ENCODE measurements at regions of chr14 and their contacts with region 1.

Region 1: DNA sequence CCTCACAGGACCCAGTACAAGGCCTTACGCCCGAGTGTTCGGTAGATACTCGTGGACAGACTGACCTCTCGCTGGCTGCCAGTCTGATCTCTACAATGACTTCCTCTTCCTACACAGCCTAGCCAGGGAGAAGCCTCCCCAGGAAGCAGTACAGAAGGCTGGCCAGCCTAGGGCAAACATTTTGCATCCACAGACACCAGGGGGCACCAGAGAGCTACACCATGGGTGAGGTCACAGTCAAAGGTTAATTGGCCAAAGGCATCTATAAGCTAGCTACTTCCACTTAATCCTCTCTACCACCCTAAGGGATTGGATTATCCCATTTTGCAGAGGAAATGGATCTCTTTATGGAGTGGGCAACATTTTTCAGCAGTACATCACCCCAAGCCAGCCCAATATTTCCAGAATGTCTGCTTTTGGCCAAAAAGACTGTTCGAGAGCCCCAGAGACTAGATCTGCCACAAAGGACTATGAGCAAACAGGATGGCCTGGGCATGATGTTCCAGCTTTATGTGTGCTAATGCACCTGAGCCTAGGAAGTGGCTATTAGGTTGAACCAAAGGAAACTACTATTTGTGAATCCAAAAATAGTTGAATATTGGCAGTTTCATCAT is 14.6 kb upstream of the PNMA1 start:
- DNase-seq: peak; percentile 78 to 87
- ATAC-seq: peak; percentile 60 to 77; a peak in 5 of 6 replicates
- H3K4me3 ChIP-seq: no peak overlapping the region
- H3K27ac ChIP-seq: peak overlapping the region; percentile 42 to 76; a peak in 5 of 6 replicates
- H3K4me1 ChIP-seq: peaks cover 50% of the 10 kb centered on the region
- CTCF ChIP-seq: peak; percentile 92
- EP300 ChIP-seq: no peak
- POLR2A ChIP-seq: no peak
- RAD21 ChIP-seq: peak; percentile 95 to 97

Region 2: DNA sequence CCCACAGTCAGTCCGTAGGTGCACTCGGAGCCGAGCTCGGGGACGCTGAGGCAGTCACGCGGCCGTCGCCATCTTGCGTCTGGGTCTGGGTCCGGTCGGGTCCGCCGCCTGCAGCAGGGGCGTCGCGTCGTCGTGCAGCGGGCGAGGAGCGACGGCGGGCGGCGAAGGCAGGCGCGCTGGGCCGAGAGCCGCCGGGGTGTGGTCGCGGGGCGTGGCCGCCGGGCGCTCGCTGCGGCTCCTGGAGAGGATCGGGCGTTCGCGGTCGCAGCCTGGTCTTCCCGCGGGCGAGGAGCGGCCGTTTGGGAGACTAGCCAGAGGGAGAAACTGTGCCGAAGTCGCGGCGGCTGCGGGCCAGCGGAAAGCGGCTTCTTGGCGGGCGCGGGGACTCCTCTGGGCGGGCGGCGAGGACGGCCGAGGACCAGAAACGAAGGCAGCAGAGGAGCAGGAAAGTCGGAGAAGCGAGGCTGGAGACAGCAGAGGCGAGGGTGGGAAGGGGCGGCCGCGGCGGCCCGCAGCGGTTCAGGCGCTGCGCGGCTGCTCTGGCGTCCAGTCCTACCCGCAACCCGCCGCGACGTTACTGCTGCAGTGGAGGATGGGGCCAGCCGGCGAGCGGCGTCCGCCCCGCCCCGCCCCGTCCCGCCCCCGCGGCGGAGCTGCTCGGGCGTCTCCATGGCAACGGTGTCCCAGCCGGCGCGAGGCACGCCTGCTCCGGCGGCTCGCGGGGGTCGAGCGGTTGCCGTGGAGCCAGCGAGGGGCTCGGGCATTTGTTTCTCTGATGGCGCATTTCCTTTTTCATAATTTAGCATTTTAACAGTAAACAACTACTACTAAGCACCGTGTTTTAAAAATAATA is 14.8 kb before region 1 on chr14 and contains the start of gene PNMA1:
- CTCF ChIA-PET with region 1: interaction called, 25 read pairs
- POLR2A ChIA-PET with region 1: interaction called, 29 read pairs
- DNase-seq: peak; percentile 82 to 95
- ATAC-seq: peak; percentile 77 to 86
- H3K4me3 ChIP-seq: peak within 1 kb of the TSS; percentile 73
- H3K27ac ChIP-seq: peak within 1 kb of the TSS; percentile 94 to 97
- H3K4me1 ChIP-seq: peaks cover 19% of the 10 kb centered on the region
- CTCF ChIP-seq: no peak
- EP300 ChIP-seq: no peak
- POLR2A ChIP-seq: peak; percentile 94
- RAD21 ChIP-seq: no peak; a peak in 2 of 5 replicates
- polyA plus RNA-seq, gene PNMA1: 20.8 and 21.2 TPM in 2 replicates

Region 3: DNA sequence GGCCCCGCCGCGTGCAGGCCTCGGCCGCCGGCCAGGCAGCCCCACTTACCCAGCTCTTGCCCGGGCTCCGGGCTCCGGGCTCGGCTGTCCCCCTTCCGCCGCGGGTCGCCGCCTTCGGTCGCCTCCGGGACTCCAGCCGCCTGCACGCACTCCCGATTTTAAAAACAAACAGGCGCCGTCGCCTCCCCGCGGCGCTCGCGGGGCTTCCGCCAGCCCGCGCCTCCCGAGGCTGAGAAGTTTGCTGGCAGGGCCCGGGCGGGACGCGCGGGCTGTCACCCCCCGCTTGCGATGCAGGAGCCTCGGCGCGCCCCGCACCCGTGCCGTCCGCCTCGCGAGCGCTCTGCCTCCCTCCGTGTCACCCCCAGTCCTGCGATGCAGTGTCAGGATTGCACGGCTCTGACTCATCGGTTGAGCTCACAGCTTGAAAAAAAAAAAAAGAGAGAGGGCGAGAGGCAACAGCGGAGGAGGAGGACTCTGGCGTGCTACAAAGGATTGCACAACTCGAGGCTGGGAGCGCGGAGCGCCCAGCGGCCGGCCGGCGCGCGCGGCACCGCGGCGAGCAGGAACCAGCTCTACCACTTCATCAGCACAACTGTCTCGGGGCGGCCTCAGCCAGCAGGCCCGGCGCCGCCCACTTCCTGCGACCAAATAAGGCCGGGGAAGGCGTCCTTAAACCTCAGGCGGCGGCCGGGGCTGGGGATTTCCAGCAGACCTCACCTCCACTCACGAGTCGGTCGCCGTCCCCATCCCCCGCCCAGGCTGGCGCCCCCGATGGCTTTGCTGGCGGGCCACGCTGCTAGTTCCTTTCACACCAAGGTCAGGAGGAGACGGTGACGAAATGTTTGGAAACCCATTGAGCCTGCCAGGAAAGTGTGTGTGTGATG is 31.1 kb after region 1 on chr14:
- CTCF ChIA-PET with region 1: interaction called, 210 read pairs
- POLR2A ChIA-PET with region 1: interaction called, 5 read pairs
- DNase-seq: peak; percentile 95 to 98
- ATAC-seq: peak; percentile 82 to 91
- H3K4me3 ChIP-seq: peak overlapping the region; percentile 81
- H3K27ac ChIP-seq: peak overlapping the region; percentile 88 to 99
- H3K4me1 ChIP-seq: peaks cover 82% of the 10 kb centered on the region
- CTCF ChIP-seq: no peak
- EP300 ChIP-seq: peak in 1 of 2 experiments; percentile 41; a peak in 2 of 5 replicates
- POLR2A ChIP-seq: peak; percentile 50
- RAD21 ChIP-seq: peak in 1 of 2 experiments; percentile 33; a peak in 1 of 5 replicates

Region 4: DNA sequence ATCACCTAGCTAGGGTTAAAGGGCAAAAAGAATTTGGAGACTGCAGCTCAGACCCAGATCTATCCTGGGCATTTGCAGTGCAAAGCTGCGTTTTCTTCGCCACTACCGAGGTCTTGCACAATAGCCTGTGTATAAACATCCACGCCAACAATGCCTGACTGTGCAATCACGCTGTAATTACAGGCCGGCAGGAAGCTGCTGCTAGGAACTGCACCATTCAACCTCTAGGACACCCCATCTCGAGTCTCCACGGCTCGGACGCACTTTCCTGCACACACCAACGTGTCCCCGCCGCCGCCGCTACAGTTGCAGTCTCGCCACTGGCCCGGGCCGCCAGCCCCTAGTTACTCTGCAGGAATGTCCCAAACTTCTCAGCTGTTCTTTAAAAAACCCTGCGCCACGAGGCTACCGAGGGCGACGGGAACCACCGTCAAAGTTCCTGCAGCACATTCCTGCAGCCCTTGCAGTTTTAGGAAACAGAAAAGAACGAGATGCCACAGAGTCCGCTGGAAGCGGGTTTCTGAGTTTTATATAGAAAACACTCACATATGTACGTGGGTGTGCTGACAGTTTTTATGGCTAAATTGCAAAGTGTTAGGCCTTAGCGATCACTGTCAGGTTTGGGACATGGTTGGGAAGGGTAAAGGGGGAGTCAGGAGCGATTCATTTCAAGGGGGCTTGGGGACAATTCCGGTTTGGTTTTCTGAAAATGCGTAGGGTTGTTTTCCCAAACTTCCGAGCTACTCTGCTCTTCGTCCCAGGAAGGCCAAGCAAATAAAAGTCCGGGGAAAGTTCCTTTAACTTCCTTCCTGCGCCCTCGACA is 57.3 kb after region 1 on chr14:
- CTCF ChIA-PET with region 1: interaction called, 21 read pairs
- POLR2A ChIA-PET with region 1: interaction called, 3 read pairs
- DNase-seq: peak; percentile 60 to 88
- ATAC-seq: peak; percentile 86 to 90
- H3K4me3 ChIP-seq: peak overlapping the region; percentile 79
- H3K27ac ChIP-seq: peak overlapping the region; percentile 95 to 100
- H3K4me1 ChIP-seq: peaks cover 33% of the 10 kb centered on the region
- CTCF ChIP-seq: no peak
- EP300 ChIP-seq: no peak
- POLR2A ChIP-seq: peak; percentile 36; the same call in 1 of the 2 replicates
- RAD21 ChIP-seq: 0 out of 5 replicates have a peak, but pooled peaks of 1 of the 2 experiments have one; percentile 23

Region 5: DNA sequence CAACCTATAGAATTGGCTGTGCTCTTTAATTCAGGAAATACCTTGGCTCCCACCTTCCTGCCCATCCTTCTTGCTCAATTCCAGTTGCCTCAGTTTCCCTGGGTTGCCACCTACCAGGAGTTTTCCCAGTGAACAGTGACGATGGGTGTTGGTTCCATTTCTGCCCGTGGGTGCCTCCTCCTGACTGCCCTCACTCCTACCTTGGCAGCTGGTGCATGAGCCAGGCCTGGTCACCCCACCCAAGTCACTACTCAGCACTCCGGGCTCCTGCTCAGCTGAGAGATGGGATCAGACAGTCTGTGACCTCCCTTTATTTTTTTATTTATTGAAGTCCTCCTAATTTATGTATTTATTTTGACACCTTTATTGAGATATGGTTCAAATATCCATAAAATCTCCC is 91.8 kb after region 1 on chr14:
- CTCF ChIA-PET with region 1: interaction called, 191 read pairs
- POLR2A ChIA-PET with region 1: no interaction called
- DNase-seq: no peak
- ATAC-seq: no peak
- H3K4me3 ChIP-seq: no peak overlapping the region
- H3K27ac ChIP-seq: no peak overlapping the region
- H3K4me1 ChIP-seq: peaks cover 10% of the 10 kb centered on the region
- CTCF ChIP-seq: no peak
- EP300 ChIP-seq: no peak
- POLR2A ChIP-seq: no peak
- RAD21 ChIP-seq: no peak

Region 6: GRCh38 chr14:73851644-73852382 is 123.0 kb after region 1 on chr14 and contains the start of gene PTGR2:
- CTCF ChIA-PET with region 1: interaction called, 47 read pairs
- POLR2A ChIA-PET with region 1: interaction called, 7 read pairs
- DNase-seq: peak; percentile 98 to 99
- ATAC-seq: peak; percentile 92 to 94
- H3K4me3 ChIP-seq: peak within 1 kb of the TSS; percentile 74
- H3K27ac ChIP-seq: peak within 1 kb of the TSS; percentile 93 to 94
- H3K4me1 ChIP-seq: peaks cover 27% of the 10 kb centered on the region
- CTCF ChIP-seq: no peak
- EP300 ChIP-seq: no peak
- POLR2A ChIP-seq: peak; percentile 83
- RAD21 ChIP-seq: 0 out of 5 replicates have a peak, but pooled peaks of 1 of the 2 experiments have one; percentile 9
- polyA plus RNA-seq, gene PTGR2: 17.7 and 30.5 TPM in 2 replicates

Region 7: GRCh38 chr14:73913256-73913655 is 184.4 kb after region 1 on chr14:
- CTCF ChIA-PET with region 1: no interaction called
- POLR2A ChIA-PET with region 1: no interaction called
- DNase-seq: peak in 1 of 2 experiments; percentile 38
- ATAC-seq: no peak
- H3K4me3 ChIP-seq: no peak overlapping the region
- H3K27ac ChIP-seq: no peak overlapping the region
- H3K4me1 ChIP-seq: 0 out of 3 replicates have a peak, but pooled peaks cover 6% of the 10 kb centered on the region
- CTCF ChIP-seq: no peak
- EP300 ChIP-seq: no peak
- POLR2A ChIP-seq: no peak
- RAD21 ChIP-seq: no peak